ENCODE measurements at regions of chr11 and their contacts with region 1.

Region 1: GRCh38 chr11:2532704-2533586 is 88.1 kb downstream of the KCNQ1 start:
- DNase-seq: peak; percentile 95
- H3K4me3 ChIP-seq: peak overlapping the region; percentile 29 to 38
- H3K27ac ChIP-seq: peak overlapping the region in 1 of 2 donors; percentile 41
- H3K4me1 ChIP-seq: peaks cover 7% of the 10 kb centered on the region
- H3K27me3 ChIP-seq: no peaks in the 10 kb centered on the region
- CTCF ChIP-seq: peak; percentile 99
- POLR2A ChIP-seq: no peak

Region 2: DNA sequence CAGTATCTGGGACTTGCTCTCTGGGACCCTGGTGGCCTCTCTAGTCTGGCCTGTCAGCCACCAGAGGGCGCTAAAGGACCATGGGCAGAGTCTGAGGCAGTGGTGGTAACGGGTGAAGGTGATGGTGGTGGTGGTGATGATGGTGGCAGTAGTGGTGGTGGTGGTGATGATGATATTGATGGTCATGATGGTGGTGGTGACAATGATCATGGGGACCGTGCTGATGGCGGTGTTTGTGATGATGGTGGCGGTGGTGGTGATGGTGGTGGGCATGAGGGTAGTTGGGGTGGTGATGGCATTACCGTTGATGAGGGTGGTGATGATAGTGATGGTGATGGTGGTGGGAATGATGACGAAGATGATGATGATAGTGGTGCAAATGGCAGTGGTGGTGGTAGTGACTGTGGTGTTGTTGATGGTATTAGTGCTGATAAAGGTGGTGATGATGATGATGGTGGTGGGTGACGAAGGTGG is 104.6 kb before region 1 on chr11:
- intact Hi-C with region 1: loop called (anchors 5 kb)
- DNase-seq: peak; percentile 90
- H3K4me3 ChIP-seq: no peak overlapping the region
- H3K27ac ChIP-seq: no peak overlapping the region
- H3K4me1 ChIP-seq: no peaks in the 10 kb centered on the region
- H3K27me3 ChIP-seq: no peaks in the 10 kb centered on the region
- CTCF ChIP-seq: peak; percentile 92 to 95 (median 94)
- POLR2A ChIP-seq: no peak

Region 3: GRCh38 chr11:2888266-2888968 is 355.5 kb after region 1 on chr11:
- intact Hi-C with region 1: loop called (anchors 2 kb)
- DNase-seq: peak; percentile 96
- H3K4me3 ChIP-seq: no peak overlapping the region
- H3K27ac ChIP-seq: peak overlapping the region in 1 of 2 donors; percentile 10
- H3K4me1 ChIP-seq: peaks cover 48% of the 10 kb centered on the region
- H3K27me3 ChIP-seq: no peaks in the 10 kb centered on the region
- CTCF ChIP-seq: peak; percentile 96 to 98 (median 97)
- POLR2A ChIP-seq: no peak

Measured in testis (tissue), 5 donors.